Spleen (tissue), 13 donors: ENCODE measurements at regions of chr12 and their contacts with region 1.

Region 1: DNA sequence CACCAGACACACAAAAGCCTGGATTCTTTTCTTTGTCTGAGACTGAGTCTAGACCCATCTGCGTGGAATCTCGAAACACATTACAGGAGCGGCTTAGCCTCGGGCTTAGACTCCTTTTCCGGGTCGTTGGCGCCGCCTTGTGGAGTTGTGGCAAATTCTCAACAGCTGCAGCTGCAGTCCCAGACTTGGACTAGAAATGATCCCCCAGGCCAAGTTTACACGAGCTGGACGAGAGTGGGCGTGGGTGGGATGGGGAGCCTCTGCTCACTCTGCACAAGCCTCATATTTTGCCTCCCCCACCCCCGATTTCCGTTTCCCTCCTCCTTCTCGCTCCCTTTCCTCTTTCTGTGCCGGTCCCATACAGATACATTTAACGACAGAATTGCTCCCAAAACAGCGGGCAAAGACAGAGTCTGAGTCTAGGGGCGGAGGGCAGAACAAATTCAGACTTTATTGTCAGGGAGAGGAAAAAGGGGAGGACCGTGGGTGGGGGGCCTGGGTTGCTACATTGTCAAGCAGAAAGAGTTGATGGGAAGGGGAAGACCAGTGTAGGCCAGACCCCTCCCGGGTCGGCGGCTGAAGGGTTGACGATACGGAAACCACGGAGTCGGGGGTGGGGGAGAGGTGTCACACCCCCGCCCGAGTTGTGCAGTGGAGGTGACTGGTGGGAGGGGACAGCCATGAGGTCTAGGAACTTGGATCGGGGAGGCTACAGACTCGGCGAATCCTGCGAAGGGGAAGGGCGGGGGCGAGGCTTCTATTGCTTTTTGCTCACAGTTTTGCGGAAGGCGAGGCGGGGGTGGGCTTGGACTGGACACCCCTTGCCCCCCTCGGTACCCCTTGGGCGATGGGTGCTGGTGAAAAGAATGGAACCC is 4.7 kb upstream of the GPR84 start:
- DNase-seq: peak; percentile 97
- H3K4me3 ChIP-seq: peak overlapping the region in 6 of 8 donors; percentile 19 to 62 (median 30)
- H3K27ac ChIP-seq: peak overlapping the region in 6 of 8 donors; percentile 3 to 63 (median 38)
- H3K4me1 ChIP-seq: peaks cover 0 to 72% (median 41%) of the 10 kb centered on the region in 6 donors
- H3K27me3 ChIP-seq: no peaks in the 10 kb centered on the region
- CTCF ChIP-seq: peak; percentile 60 to 90 (median 81)
- POLR2A ChIP-seq: no peak

Region 2: DNA sequence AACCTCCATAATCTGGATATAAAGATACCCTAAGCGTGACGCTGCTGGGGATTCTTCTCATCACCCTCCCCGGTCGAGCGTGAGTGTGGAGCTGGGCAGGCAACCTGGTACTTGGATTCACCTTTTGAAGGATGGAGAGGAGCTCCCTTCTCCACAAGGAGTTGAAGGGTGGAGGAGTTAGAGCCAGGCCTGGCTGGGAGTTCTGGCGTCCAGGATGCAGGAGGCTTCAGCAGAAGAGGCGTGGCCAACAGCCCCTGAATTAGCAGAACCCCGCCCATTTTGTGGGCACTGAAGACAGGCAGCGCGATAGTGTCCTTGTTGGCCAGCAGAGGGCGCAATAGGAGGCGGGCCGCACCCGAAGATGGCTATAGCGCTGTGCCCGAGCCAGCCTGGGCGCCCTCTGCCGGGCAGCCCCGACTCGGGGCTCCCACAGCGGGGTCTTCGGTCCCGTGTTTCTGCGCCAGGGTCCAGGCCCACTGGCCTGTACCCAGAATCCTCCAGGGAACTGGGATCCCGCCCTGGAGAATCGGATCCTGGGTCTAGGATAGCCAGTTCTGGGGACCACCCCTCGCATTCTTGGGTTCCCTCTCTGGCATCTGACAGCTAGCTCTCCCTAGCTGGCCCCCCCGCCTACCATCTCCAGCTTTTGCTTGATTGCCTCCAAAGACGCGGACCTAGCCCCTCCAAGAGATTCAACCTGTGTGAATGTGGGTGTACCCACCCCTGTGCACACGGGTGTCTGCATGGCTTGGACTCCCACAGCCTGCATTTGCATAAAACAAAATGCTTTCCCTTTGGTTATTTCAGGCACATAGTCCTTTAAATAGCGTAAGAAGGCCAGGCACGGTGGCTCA is 154.2 kb before region 1 on chr12:
- intact Hi-C with region 1: loop called (anchors 10 kb)
- DNase-seq: peak; percentile 97
- H3K4me3 ChIP-seq: peak overlapping the region in 6 of 8 donors; percentile 25 to 64 (median 34)
- H3K27ac ChIP-seq: peak overlapping the region in 3 of 8 donors; percentile 35 to 41 (median 36)
- H3K4me1 ChIP-seq: peaks cover 30 to 47% (median 39%) of the 10 kb centered on the region in 6 donors
- H3K27me3 ChIP-seq: peaks cover 0 to 94% (median 22%) of the 10 kb centered on the region in 7 donors
- CTCF ChIP-seq: peak; percentile 89 to 100 (median 98)
- POLR2A ChIP-seq: no peak

Region 3: DNA sequence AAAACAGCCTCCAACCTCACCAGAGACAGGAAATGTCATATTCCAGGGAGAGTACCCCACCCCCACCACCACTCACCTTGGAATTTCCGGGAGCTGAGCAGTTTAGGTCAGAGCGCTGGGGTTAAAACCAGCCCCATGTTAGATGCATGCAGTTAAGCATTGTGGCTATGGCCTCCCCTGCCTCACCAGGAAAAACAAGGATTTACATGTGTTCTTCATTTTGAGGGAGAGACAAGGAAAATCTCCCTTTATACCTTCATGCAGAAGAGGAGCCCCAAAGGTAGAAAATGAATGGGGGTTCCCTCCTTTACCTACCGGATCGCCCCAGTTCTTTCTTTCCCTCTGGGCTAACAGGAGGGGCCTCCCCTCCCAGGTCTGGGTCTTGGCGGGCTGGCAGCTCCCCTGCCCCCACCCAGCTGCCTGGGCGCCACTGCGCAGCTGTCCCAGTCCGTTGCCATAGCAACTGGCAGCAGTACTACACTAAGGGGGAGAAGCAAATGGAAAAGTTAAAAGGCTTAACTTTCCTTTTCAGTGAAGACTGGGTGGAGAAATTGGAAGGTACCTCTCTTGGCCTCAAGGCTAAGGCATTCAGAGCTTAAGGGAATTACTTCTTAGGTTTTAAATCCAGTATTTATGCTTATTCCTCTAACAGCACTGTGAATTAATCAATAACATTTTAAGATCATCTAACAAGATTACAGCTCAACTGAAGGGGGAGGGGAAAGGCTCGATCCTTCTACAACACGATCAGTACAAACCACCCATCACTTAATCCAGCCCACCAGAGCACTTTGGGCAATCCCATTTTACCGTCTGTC is 109.5 kb before region 1 on chr12:
- intact Hi-C with region 1: loop called (anchors 10 kb)
- DNase-seq: peak; percentile 85
- H3K4me3 ChIP-seq: peak overlapping the region; percentile 2 to 63 (median 34)
- H3K27ac ChIP-seq: peak overlapping the region in 7 of 8 donors; percentile 1 to 62 (median 45)
- H3K4me1 ChIP-seq: peaks cover 19 to 63% (median 40%) of the 10 kb centered on the region in 6 donors
- H3K27me3 ChIP-seq: no peaks in the 10 kb centered on the region
- CTCF ChIP-seq: no peak
- POLR2A ChIP-seq: no peak

Region 4: DNA sequence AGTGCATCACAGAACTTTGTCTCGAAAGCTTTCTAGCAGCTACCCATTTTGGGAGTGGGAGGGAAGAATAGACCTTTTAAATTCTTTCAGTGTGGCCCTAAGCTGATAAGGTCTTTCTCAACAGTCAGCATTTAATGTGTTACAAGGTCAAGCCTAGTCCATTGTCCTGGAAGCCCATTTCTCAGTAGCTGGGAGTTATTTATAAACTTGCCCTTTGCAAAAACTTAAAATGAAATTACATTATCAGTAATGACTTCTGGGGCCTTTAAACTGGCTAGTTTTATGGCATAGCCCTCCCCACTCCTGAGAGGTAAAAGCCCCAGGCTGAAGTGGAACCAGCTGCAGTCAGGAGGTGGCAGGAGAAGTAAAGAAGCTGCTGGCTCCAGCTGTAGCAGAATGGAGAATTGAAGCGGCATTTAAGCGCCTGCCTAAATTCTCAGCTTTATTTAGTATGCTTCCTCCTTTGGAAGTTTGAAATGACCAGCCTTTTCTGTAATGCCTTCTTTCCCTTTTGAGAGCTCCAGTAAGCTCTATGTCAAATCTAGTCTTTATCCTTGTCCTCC is 31.6 kb before region 1 on chr12:
- intact Hi-C with region 1: no loop called
- DNase-seq: no peak
- H3K4me3 ChIP-seq: no peak overlapping the region
- H3K27ac ChIP-seq: peak overlapping the region in 6 of 8 donors; percentile 10 to 61 (median 54)
- H3K4me1 ChIP-seq: peaks cover 11 to 73% (median 30%) of the 10 kb centered on the region in 6 donors
- H3K27me3 ChIP-seq: no peaks in the 10 kb centered on the region
- CTCF ChIP-seq: no peak
- POLR2A ChIP-seq: no peak

Region 5: DNA sequence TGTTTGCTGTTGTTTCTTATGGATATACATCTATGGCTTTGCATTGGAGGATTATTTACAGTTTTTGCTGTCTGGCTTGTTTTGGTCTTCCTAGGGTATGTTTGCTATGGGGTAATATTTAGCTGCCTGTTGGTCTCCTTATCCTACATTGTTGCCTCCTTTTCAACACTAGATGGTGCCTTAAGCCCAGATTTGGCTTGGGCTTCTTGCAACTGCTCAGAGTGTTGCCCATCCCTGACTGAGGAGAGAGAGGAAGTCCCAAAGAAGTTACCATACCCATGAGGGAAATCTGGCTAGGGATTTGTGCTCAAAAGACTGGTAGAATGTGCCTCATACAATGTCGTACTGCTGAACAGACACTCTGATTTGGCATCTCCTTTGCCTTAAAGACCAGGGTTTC is 390.8 kb after region 1 on chr12:
- intact Hi-C with region 1: no loop called
- DNase-seq: no peak
- H3K4me3 ChIP-seq: no peak overlapping the region
- H3K27ac ChIP-seq: no peak overlapping the region
- H3K4me1 ChIP-seq: no peaks in the 10 kb centered on the region
- H3K27me3 ChIP-seq: peaks cover 0 to 5% (median 0%) of the 10 kb centered on the region in 7 donors
- CTCF ChIP-seq: no peak
- POLR2A ChIP-seq: no peak